ENCODE measurements at regions of chr13 and their contacts with region 1.

Region 1: DNA sequence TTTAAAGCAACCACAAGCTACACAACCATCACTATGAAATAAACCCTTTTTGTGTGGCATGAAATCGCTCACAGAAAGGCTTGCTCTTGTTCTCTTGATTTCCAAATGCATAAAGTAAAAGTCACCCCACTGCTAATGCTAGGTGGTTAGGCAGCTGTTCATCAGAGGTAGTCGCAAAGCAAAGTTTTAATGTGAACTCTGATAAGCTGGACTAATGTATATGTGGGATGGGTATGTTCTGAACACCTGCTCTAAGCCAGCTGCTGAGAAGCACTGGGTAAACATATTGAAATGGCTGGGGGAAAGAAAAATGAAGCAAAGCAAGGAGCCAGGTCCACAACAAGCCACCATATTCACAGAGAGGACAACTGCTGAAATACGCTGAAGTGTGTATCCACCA is 142.3 kb downstream of the KLF12 start:
- DNase-seq: no peak
- ATAC-seq: no peak
- H3K4me3 ChIP-seq: no peak overlapping the region
- H3K4me3 Mint-ChIP-seq: no peak overlapping the region
- H3K27ac ChIP-seq: no peak overlapping the region
- H3K27ac Mint-ChIP-seq: peak overlapping the region; percentile 20
- H3K4me1 ChIP-seq: peaks cover 23% of the 10 kb centered on the region
- H3K4me1 Mint-ChIP-seq: peaks cover 70% of the 10 kb centered on the region
- H3K27me3 ChIP-seq: no peaks in the 10 kb centered on the region
- H3K27me3 Mint-ChIP-seq: no peaks in the 10 kb centered on the region
- CTCF ChIP-seq: no peak

Region 2: DNA sequence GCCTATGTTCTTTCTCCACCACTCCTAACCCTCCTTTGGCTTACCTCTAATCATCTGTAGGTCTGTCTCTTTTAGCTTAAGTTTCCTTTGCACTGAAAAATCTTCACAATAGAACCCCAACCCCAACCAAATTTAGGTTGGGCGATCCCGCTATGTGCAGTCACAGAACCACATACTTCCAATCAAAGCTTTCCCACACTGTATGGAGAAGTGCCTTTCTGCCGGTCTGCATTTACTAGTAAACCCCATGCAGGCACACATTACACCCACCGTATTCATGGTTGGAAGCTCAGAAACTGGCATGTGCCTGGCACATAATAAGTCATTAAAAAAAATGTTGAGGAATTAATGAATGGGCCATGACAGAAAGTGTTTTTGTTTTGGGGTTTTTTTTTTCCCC is 16.1 kb before region 1 on chr13:
- CTCF ChIA-PET with region 1: no interaction called
- POLR2A ChIA-PET with region 1: no interaction called
- intact Hi-C with region 1: loop called in 1 of 2 experiments (anchors 2 kb)
- DNase-seq: no peak
- ATAC-seq: no peak
- H3K4me3 ChIP-seq: no peak overlapping the region
- H3K4me3 Mint-ChIP-seq: no peak overlapping the region
- H3K27ac ChIP-seq: no peak overlapping the region
- H3K27ac Mint-ChIP-seq: peak overlapping the region; percentile 23
- H3K4me1 ChIP-seq: peaks cover 15% of the 10 kb centered on the region
- H3K4me1 Mint-ChIP-seq: peaks cover 72% of the 10 kb centered on the region
- H3K27me3 ChIP-seq: no peaks in the 10 kb centered on the region
- H3K27me3 Mint-ChIP-seq: no peaks in the 10 kb centered on the region
- CTCF ChIP-seq: no peak

Region 3: GRCh38 chr13:75812751-75813181 is 1820.9 kb after region 1 on chr13:
- CTCF ChIA-PET with region 1: no interaction called
- POLR2A ChIA-PET with region 1: no interaction called
- intact Hi-C with region 1: loop called in 1 of 2 experiments (anchors 5 kb)
- DNase-seq: no peak
- ATAC-seq: no peak
- H3K4me3 ChIP-seq: no peak overlapping the region
- H3K4me3 Mint-ChIP-seq: no peak overlapping the region
- H3K27ac ChIP-seq: no peak overlapping the region
- H3K27ac Mint-ChIP-seq: no peak overlapping the region
- H3K4me1 ChIP-seq: no peaks in the 10 kb centered on the region
- H3K4me1 Mint-ChIP-seq: no peaks in the 10 kb centered on the region
- H3K27me3 ChIP-seq: no peaks in the 10 kb centered on the region
- H3K27me3 Mint-ChIP-seq: no peaks in the 10 kb centered on the region
- CTCF ChIP-seq: no peak

Measured in CD8-positive, alpha-beta T cell (primary cell).